ENCODE measurements at regions of chr4 and their contacts with region 1.

Region 1: DNA sequence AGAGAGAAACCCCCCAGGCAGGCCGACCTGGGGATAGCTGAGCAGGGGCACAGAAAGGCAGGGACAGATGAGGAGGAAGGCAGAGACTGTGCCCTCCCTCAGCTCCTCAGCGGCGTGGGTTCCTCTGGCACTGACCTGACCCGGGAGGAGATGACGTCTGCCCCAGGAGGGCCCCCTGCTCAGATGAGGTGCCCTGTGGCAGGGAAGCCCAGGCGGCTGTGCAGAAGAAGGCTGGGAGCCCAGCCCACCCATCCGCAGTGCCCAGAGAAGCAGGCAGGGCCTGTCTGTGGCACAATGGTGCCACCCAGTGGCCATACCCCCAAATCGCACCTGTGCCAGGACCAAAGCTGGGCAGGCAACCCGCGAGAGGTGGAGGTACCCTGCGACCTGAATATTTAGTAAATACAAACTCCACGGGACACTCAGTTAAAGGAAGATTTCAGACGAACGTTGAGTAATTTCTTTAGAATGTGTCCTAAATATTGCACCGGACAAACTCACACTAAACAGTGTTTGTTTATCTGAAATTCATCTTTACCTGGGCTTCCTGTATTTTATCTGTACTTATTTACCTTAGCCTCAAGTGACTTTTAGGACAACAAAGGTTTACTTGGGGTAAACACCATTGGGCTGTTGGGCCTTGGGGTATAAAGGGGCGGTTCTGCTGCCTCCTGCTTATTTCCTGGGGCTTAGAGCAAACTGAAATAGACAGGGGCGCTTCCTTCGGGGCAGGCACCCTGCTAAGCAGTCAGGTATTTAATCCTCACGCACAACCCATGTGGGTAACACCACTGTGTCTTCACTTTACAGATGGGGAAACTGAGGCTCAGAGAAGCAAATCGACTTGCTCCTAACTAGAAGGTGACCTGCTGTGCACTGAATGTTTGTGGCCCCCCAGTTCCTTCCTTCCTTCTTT is 46.5 kb upstream of the HMX1 start:
- DNase-seq: peak; percentile 88

Region 2: DNA sequence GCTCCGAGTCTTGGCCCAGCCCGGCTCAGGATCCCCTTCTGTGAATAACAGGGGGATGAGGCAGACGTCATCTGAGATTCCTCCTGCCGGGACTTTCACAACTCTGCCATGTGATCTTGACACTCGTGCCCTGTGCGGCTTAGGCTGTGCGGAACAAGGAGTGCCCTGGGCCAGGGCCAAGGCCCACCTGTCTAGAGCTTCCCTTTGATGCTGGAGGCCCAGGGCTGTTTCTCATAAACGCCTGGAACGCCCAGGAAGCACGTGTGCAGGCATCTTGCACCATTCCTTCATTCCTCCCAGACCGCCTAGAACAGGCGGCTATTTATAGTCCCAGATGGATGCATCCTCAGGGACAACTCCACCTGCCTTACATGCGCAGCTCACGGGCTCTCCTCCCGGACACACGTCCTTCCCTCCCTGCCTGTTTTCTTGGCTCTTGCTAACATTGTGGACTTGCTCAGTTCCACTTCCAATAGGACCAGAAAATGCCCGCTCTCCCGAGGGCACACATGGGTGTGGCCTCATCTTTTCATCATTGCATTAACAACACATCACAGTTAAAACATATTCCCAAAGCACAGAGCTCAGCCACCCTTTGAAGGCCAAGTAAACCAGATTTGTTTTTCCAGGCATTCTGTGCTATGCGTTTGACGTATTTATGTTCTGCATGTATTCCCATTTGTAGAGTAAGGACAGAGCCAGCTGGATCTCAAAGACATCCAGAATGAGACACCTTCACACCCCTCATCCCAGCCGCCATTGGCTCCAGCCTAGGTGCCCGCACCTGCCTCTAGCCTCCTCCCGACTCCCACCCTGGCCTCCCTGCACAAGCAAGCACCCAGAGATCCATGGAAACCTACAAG is 816.7 kb before region 1 on chr4:
- intact Hi-C with region 1: no loop called
- DNase-seq: no peak

Region 3: DNA sequence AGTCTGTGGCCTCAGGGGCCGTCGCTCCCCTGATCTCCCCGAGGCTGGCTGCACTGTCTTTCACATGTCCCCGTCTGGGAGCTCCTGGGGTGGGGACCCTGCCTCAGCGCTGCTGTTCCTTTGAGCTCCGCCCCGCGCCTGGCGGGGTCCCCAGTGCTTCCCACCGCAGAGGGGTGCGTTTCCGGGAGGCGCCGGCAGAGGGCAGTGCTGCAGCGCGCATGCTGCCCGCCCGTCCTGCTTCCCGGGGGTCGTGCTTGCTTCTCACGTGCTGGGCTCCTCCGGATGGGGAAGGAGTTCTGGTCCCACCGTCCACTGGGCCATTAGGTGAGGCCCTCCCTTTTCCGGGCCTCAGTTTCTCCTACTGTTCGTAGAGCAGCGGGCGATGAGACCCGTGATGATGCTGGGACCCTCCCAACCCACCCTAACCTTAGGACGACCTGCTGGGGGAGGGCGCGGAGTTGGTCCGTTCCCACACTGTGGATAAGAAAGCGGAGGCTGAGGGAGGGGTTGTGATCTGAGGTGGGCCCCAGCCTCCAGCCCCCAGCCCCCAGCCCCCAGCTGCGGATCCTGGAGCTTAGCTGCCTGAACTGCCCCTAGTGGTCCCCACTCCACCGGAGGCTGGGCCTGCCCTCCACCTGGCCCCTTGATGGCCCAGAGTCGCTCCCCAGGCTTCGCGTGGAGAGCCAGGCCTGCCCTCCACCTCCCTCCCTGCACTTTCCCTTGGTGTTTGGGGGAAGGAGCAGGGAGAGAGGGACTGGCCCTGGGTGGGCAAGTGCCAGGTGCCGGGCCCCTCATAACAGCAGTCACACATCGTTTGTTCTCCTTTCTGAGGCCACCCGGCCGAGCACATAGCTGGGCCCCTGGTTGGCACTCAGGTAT is 310.3 kb before region 1 on chr4:
- intact Hi-C with region 1: loop called in 1 of 2 experiments (anchors 10 kb)
- DNase-seq: no peak